Astrocyte of the cerebellum (primary cell): ENCODE measurements at regions of chr1 and their contacts with region 1.

Region 1: DNA sequence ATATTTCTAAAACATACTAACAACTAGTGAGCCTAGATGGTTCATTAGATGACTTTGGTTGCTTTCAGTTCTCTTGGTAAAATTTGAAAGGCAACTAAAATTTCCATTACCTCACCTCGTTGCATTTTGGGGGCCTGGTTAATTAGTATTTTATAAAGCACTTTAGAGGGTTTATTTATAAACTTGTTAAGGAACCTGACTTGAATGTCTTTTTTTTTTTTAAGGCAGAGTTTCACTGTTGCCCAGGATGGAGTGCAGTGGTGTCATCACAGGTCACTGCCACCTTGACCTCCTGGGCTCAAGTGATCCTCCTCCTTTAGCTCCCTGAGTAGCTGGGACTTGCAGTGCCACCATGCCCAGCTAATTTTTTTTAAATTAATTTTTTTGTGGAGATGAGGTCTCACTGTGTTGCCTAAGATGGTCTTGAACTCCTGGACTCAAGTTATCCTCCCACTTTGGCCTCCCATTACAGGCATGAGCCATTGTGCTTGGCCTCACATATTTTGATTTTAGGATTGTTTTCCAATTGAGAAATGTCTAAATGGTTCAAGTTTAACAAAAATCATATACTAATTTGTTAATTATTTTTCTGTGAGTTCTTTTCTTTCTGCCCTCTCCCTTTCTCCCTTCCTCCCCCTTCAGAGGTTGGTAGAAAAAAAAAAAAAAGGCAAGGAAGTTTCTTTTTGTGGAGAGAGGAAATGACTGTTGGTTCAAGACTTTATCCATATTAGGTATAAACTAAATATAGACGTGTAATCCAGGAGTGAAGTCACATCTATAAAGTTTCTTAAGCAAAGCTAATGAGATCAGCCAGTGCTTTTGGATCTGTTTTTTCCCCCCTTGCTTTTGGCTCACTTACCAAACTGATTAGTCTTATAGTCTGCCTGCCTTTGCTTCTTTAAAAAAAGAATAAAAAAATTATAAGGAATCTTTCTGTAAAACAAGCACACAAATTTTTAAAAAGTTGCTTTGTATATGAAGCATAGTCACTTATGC is 24.7 kb downstream of the CLIC4 start:
- DNase-seq: peak; percentile 91
- H3K4me3 ChIP-seq: no peak overlapping the region
- CTCF ChIP-seq: no peak

Region 2: DNA sequence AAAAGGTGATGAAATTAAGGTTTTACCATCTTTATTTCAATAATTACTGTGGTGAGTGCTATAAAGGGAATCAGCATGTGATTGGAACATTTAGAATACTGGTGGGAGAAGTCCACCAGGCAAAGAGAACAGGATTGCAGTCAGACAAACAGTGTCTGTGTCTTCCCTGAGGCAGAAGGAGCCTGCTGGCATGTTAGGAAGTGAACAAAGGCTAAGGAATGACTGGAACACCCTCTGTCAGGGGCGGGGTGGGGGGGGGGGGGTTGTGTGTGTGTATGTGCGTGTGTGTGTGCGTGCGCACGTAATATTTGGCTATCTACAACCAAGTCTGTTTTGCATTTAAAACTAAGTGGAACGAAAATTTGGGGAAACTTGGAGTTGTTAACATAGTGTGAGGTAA is 96.6 kb before region 1 on chr1:
- in situ Hi-C with region 1: loop called (anchors 5 kb)
- DNase-seq: no peak
- H3K4me3 ChIP-seq: no peak overlapping the region
- CTCF ChIP-seq: no peak

Region 3: DNA sequence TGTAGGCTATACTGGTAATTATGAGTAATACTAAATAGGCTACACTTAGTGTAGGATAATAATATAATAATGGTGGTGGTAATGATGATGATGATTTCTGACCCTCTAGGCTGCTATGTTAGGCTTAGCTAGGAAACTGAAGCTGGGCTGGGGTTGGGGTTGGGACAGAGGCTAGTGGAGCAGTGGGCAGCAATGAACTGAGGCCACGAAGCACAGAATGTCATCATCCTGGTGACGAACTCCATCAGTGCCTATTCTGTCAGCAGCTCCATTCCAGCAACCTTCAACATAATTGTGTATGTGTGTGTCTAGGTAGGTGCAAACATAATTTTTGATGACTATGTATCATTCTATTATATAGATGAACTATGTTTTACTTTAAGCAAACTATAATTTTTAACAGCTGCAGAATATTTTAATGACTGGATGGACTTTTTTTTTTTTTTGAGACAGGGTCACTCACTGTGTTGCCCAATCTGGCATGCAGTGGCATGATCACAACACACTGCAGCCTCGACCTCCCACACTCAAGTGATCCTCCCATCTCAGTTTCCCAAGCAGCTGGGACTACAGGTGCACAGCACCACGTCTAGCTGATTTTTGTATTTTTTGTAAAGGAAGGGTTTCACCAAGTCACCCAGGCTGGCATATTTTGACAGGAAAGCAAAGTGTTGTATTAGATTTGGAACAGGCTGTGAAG is 37.6 kb before region 1 on chr1:
- in situ Hi-C with region 1: loop called (anchors 5 kb)
- DNase-seq: no peak
- H3K4me3 ChIP-seq: no peak overlapping the region
- CTCF ChIP-seq: no peak

Region 4: GRCh38 chr1:24822887-24823286 is 52.9 kb after region 1 on chr1:
- in situ Hi-C with region 1: loop called (anchors 5 kb)
- DNase-seq: no peak
- H3K4me3 ChIP-seq: no peak overlapping the region
- CTCF ChIP-seq: no peak